ENCODE measurements at regions of chr14 and their contacts with region 1.

Region 1: GRCh38 chr14:90911121-90911520 is 94.9 kb upstream of the TTC7B start:
- DNase-seq: no peak
- ATAC-seq: no peak
- H3K4me3 ChIP-seq: no peak overlapping the region
- H3K4me3 Mint-ChIP-seq: no peak overlapping the region
- H3K27ac ChIP-seq: no peak overlapping the region
- H3K27ac Mint-ChIP-seq: no peak overlapping the region
- H3K4me1 ChIP-seq: no peaks in the 10 kb centered on the region
- H3K4me1 Mint-ChIP-seq: peaks cover 12% of the 10 kb centered on the region
- H3K27me3 ChIP-seq: no peaks in the 10 kb centered on the region
- H3K27me3 Mint-ChIP-seq: no peaks in the 10 kb centered on the region
- CTCF ChIP-seq: no peak

Region 2: GRCh38 chr14:91078095-91078737 is 167.1 kb after region 1 on chr14:
- CTCF ChIA-PET with region 1: no interaction called
- POLR2A ChIA-PET with region 1: no interaction called
- intact Hi-C with region 1: loop called (anchors 5 kb)
- DNase-seq: no peak
- ATAC-seq: no peak
- H3K4me3 ChIP-seq: no peak overlapping the region
- H3K4me3 Mint-ChIP-seq: no peak overlapping the region
- H3K27ac ChIP-seq: no peak overlapping the region
- H3K27ac Mint-ChIP-seq: no peak overlapping the region
- H3K4me1 ChIP-seq: peaks cover 0 to 3% of the 10 kb centered on the region in 2 donors
- H3K4me1 Mint-ChIP-seq: peaks cover 4% of the 10 kb centered on the region
- H3K27me3 ChIP-seq: no peaks in the 10 kb centered on the region
- H3K27me3 Mint-ChIP-seq: no peaks in the 10 kb centered on the region
- CTCF ChIP-seq: no peak

Measured in B cell (primary cell).